ENCODE measurements at regions of chr5 and their contacts with region 1.

Region 1: DNA sequence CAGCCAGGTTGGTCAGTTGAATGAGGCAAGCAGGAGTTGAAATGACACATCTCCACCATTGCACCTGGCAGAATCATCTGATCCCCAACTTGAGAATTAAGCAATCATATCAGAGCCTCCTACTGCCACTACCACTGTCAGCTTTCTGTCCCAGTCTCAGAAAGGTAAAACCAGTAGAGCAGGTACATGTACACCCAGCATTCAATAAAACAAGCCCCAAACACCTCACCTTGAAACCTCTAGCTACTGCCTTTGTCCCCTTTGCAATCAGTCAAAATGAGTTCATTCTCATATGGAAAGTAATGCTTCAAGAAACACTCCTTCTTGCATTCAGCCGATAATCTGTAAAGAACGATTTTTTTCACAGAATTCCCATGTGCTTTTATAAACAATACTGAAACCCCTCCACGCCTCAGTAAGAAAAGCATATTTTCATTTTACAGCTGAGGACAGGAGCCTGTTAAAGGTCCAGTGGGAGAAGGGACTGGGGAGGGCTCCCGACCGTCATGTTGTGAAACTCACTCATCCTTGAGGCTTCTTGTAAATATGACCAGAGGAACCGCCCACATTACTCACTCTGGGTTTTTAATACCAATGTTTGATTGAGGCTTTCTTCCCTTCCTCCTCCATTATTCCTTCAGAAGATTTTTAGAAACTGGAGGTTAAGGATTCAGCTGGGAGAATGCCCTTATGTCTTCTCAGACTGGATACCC is 61.2 kb upstream of the GLRX start:
- DNase-seq: no peak
- H3K4me3 ChIP-seq: no peak overlapping the region
- H3K4me3 Mint-ChIP-seq: no peak overlapping the region
- H3K27ac Mint-ChIP-seq: peak overlapping the region; percentile 21
- H3K4me1 ChIP-seq: peaks cover 38% of the 10 kb centered on the region
- H3K4me1 Mint-ChIP-seq: peaks cover 37% of the 10 kb centered on the region
- H3K27me3 ChIP-seq: no peaks in the 10 kb centered on the region
- H3K27me3 Mint-ChIP-seq: no peaks in the 10 kb centered on the region
- CTCF ChIP-seq: no peak

Region 2: GRCh38 chr5:95664204-95664786 is 219.5 kb before region 1 on chr5:
- CTCF ChIA-PET with region 1: no interaction called
- POLR2A ChIA-PET with region 1: no interaction called
- intact Hi-C with region 1: no loop called
- DNase-seq: peak in 1 of 2 experiments; percentile 23
- H3K4me3 ChIP-seq: no peak overlapping the region
- H3K4me3 Mint-ChIP-seq: no peak overlapping the region
- H3K27ac Mint-ChIP-seq: no peak overlapping the region
- H3K4me1 ChIP-seq: 0 out of 2 replicates have a peak, but pooled peaks cover 4% of the 10 kb centered on the region
- H3K4me1 Mint-ChIP-seq: no peaks in the 10 kb centered on the region
- H3K27me3 ChIP-seq: no peaks in the 10 kb centered on the region
- H3K27me3 Mint-ChIP-seq: no peaks in the 10 kb centered on the region
- CTCF ChIP-seq: peak; percentile 78 to 81

Region 3: GRCh38 chr5:95817440-95817839 is 66.3 kb before region 1 on chr5:
- CTCF ChIA-PET with region 1: no interaction called
- POLR2A ChIA-PET with region 1: no interaction called
- intact Hi-C with region 1: no loop called
- DNase-seq: no peak
- H3K4me3 ChIP-seq: no peak overlapping the region
- H3K4me3 Mint-ChIP-seq: no peak overlapping the region
- H3K27ac Mint-ChIP-seq: no peak overlapping the region
- H3K4me1 ChIP-seq: peaks cover 15% of the 10 kb centered on the region
- H3K4me1 Mint-ChIP-seq: peaks cover 2% of the 10 kb centered on the region
- H3K27me3 ChIP-seq: no peaks in the 10 kb centered on the region
- H3K27me3 Mint-ChIP-seq: no peaks in the 10 kb centered on the region
- CTCF ChIP-seq: no peak

Region 4: GRCh38 chr5:96113170-96113939 is 229.6 kb after region 1 on chr5:
- CTCF ChIA-PET with region 1: no interaction called
- POLR2A ChIA-PET with region 1: no interaction called
- intact Hi-C with region 1: loop called (anchors 10 kb)
- DNase-seq: no peak
- H3K4me3 ChIP-seq: no peak overlapping the region
- H3K4me3 Mint-ChIP-seq: no peak overlapping the region
- H3K27ac Mint-ChIP-seq: no peak overlapping the region
- H3K4me1 ChIP-seq: peaks cover 34% of the 10 kb centered on the region
- H3K4me1 Mint-ChIP-seq: peaks cover 23% of the 10 kb centered on the region
- H3K27me3 ChIP-seq: no peaks in the 10 kb centered on the region
- H3K27me3 Mint-ChIP-seq: no peaks in the 10 kb centered on the region
- CTCF ChIP-seq: no peak

Measured in Caco-2 (cell line).